Ascending aorta (tissue), 2 donors: ENCODE measurements at regions of chr5 and their contacts with region 1.

Region 1: GRCh38 chr5:78527054-78527859 is 121.3 kb downstream of the LHFPL2 start:
- DNase-seq: peak; percentile 79 to 96
- H3K4me3 ChIP-seq: peak overlapping the region; percentile 3 to 33
- H3K27ac ChIP-seq: peak overlapping the region; percentile 74 to 89
- H3K4me1 ChIP-seq: peaks cover 26 to 66% of the 10 kb centered on the region in 2 donors
- H3K27me3 ChIP-seq: no peaks in the 10 kb centered on the region
- CTCF ChIP-seq: no peak

Region 2: DNA sequence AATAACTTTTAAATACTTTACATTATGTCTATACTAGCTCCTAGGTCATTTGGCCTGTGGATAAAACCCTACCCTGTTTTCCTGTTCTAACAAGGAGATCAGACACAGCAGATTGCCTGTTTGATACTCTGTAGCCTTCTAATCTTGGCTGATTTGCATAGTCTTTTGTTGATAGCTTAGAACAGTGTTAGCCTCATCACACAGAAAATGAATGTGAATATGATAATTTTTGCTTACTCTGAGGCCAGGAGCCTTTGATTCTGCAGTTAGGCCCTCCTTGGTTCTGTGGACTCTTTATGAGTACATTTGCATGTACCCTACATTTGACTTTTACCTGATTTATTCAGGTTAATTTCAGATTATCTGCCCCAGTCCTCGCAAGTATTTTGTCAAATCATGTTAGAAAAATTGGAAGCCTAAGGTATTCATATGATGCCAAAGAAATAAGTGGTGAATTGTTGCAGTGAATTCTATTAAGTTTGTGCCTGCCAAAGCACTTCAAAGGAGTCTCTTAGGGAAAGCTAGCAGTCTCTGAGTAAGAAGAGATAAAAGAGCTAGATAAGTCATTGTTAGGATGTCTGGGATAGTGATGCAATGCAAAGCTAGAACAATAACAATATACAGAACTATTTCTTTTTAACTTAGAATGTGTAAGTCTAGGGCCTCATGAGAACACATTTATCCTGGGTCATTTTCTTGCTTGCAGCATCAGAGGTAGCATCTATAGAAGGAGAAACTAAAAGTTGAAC is 110.4 kb before region 1 on chr5:
- intact Hi-C with region 1: no loop called
- DNase-seq: no peak
- H3K4me3 ChIP-seq: no peak overlapping the region
- H3K27ac ChIP-seq: no peak overlapping the region
- H3K4me1 ChIP-seq: peaks cover 0 to 2% of the 10 kb centered on the region in 2 donors
- H3K27me3 ChIP-seq: no peaks in the 10 kb centered on the region
- CTCF ChIP-seq: no peak

Region 3: DNA sequence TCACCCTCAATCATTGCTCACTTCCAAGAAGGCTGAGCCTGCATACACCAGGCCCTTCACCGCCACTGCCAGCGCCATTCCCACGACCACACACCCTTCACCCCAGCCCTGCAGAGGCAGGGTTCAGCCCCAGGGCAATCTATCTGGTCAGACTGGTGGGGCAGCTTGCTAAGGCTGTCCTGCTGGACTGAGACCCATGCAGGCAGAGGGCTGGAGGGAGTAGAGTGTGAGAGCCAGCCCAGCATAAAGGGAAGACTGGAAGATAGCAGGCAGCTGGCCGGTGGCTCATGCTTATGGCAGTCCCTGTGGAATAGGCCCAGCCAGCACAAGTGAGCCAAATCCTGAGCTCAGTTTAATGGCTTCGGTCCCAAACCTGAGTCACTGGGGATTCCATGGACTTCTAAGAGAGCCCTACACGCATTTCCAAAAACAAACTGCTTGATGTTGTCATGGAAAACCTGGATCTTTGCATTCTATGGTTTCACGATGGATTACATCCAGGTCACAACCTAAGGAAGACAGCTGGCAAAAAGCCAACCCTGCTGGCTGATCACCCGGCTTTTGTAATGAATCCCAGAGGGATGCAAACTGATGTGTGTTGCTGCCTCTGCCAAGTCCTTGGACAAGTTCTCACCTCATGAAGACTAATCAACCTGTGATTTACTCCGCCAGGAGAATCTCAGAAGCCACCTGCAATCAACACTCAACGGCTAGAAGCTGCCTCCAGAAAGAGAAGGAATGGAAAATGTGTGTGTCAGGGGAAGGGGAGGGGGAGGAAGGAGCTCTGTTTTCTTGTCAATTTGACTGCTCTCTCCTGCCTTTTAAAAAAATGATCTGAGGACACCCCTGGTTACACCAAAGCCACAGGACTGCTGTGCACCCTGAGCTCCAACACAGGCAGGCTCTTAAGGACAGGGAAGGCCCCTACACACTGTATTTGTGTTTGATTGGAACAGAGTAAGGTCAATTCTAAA is 22.3 kb before region 1 on chr5:
- intact Hi-C with region 1: loop called (anchors 2 kb)
- DNase-seq: peak; percentile 62 to 97
- H3K4me3 ChIP-seq: no peak overlapping the region
- H3K27ac ChIP-seq: peak overlapping the region; percentile 60 to 73
- H3K4me1 ChIP-seq: peaks cover 10 to 36% of the 10 kb centered on the region in 2 donors
- H3K27me3 ChIP-seq: no peaks in the 10 kb centered on the region
- CTCF ChIP-seq: no peak

Region 4: DNA sequence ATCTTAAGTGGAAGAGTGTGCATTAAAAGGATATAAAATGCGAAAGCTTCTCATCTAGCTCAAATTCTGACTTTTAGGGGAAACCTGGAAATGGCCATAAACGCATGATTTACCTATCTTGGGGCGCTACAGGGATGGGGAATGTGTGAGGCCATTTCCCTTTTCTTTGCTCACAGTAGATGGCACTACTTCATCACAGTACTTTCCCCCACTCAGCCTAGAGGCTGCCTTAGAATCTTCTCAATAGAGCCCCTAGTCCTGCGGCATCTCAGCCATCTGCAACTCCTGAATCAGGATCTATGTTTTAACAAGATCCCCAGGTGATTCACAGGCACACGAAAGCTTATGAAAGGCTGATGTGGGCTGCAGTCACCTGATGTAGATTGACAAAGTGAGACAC is 10.6 kb after region 1 on chr5:
- intact Hi-C with region 1: no loop called
- DNase-seq: peak in 1 of 2 donors; percentile 63
- H3K4me3 ChIP-seq: no peak overlapping the region
- H3K27ac ChIP-seq: no peak overlapping the region
- H3K4me1 ChIP-seq: peaks cover 10 to 37% of the 10 kb centered on the region in 2 donors
- H3K27me3 ChIP-seq: no peaks in the 10 kb centered on the region
- CTCF ChIP-seq: peak; percentile 40 to 64 (median 44)